ENCODE measurements at regions of chr13 and their contacts with region 1.

Region 1: DNA sequence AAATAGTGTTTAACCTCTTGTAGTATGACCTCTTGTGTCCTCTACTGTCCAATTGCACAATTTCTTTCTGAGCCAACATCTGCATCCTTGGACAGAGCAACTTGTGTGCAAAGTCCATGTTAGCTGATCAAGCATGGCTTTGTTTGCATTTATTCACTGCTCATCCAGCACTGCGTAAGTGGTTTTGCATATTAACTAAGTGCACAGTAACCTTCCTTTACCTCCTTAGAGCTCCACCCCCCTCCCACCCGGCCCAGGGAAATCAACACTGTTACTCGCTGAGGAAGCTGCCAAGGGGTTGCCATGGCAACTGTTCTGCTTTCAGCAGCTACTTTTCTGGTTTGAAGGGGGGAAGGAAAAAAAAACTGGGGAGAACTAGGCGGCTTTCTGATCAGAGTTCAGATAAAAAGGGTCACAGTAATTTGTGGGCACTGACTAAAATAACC is 153.5 kb upstream of the KLF12 start:
- DNase-seq: peak; percentile 88
- H3K4me3 ChIP-seq: peak overlapping the region; percentile 55
- H3K27ac ChIP-seq: no peak overlapping the region
- H3K4me1 ChIP-seq: peaks cover 51% of the 10 kb centered on the region
- CTCF ChIP-seq: no peak

Region 2: GRCh38 chr13:73765651-73766384 is 521.9 kb before region 1 on chr13:
- CTCF ChIA-PET with region 1: interaction called, 3 read pairs
- POLR2A ChIA-PET with region 1: interaction called, 6 read pairs
- intact Hi-C with region 1: loop called (anchors 2 kb)
- DNase-seq: peak; percentile 88
- H3K4me3 ChIP-seq: peak overlapping the region; percentile 52
- H3K27ac ChIP-seq: peak overlapping the region; percentile 80
- H3K4me1 ChIP-seq: peaks cover 32% of the 10 kb centered on the region
- CTCF ChIP-seq: no peak

Region 3: GRCh38 chr13:73945871-73946270 is 341.9 kb before region 1 on chr13:
- CTCF ChIA-PET with region 1: no interaction called
- POLR2A ChIA-PET with region 1: no interaction called
- intact Hi-C with region 1: loop called (anchors 5 kb)
- DNase-seq: no peak
- H3K4me3 ChIP-seq: no peak overlapping the region
- H3K27ac ChIP-seq: no peak overlapping the region
- H3K4me1 ChIP-seq: peaks cover 20% of the 10 kb centered on the region
- CTCF ChIP-seq: no peak

Region 4: GRCh38 chr13:73998631-73999030 is 289.1 kb before region 1 on chr13:
- CTCF ChIA-PET with region 1: no interaction called
- POLR2A ChIA-PET with region 1: no interaction called
- intact Hi-C with region 1: loop called (anchors 10 kb)
- DNase-seq: no peak
- H3K4me3 ChIP-seq: peak overlapping the region; percentile 3
- H3K27ac ChIP-seq: peak overlapping the region; percentile 17
- H3K4me1 ChIP-seq: peaks cover 57% of the 10 kb centered on the region
- CTCF ChIP-seq: peak; percentile 58; the same call in 1 of the 2 replicates

Region 5: DNA sequence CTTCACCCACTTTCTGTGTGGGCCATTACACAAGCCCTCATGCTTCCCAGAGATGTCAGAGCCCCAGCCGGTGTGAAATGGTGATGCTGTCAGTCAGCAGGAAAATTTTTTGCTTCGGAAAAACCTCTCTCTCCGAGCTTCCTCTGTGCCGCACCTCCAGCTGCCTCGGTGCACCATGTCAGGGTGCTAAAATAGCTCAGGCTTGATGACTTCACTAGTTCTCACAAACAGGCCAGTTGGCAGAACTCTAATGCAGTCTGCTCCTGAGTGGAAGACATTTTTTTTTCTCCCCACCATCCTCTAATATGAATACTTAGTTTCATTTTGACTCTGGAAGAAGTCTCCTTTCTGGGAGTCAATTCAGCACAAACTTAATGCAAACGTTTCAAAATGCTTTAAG is 224.8 kb before region 1 on chr13:
- CTCF ChIA-PET with region 1: no interaction called
- POLR2A ChIA-PET with region 1: interaction called, 3 read pairs
- intact Hi-C with region 1: loop called (anchors 5 kb)
- DNase-seq: peak; percentile 80
- H3K4me3 ChIP-seq: peak overlapping the region; percentile 60
- H3K27ac ChIP-seq: peak overlapping the region; percentile 84
- H3K4me1 ChIP-seq: peaks cover 54% of the 10 kb centered on the region
- CTCF ChIP-seq: no peak

Region 6: DNA sequence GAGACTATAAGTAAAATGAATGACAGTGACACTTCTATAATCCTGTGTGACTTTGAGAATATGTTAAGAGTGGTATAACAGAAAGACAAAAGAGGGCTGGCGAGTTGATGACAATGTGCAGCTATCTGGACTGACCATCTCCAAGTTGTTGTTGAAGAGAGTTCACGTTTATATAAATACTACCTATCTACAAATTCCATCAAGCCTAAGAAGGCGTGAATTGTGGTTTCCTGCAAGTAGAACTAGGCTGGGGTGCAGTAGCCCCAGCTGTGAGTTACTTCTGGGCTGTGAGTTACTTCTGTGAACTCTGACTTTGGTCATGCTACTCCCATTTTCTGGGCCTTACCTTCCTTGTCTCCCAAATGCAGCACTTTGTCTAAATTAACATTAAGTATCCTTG is 633.2 kb after region 1 on chr13:
- CTCF ChIA-PET with region 1: no interaction called
- POLR2A ChIA-PET with region 1: no interaction called
- intact Hi-C with region 1: no loop called
- DNase-seq: no peak
- H3K4me3 ChIP-seq: no peak overlapping the region
- H3K27ac ChIP-seq: no peak overlapping the region
- H3K4me1 ChIP-seq: no peaks in the 10 kb centered on the region
- CTCF ChIP-seq: no peak

Region 7: DNA sequence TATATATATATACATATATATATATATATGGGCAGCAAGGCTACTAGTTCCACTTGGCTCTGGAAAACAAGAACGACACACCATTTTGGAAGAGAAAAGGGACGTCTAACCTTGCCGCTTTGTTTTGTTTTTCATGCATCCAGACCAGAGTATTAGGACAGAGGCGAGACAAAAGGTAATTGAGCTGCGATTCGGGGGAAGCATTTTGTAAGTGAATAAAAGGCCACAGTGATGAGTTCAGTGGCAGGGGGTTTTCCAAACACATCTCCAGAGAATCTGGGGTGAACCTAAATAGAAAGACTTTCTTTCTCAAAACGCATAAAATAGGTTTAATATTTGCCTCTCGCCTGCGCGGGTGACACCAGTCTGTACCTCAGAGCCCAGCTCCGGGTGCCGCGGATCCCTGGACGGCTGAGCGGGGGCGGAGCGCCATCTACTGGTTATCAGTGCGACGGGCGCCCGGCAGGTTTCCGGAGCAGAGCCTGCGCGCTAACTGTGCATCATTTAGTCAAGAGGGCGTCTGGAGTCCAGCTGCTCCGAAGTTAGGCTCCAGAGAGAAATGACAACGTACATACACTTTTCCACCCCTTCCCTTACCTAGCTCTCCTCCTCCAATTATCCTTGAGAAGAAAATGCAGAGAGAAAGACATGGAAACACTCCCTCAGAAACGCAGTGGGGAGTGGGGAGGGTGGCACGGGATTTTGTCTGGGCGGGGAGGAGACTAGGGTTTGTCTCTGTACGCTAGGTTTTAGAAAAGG is 931.9 kb after region 1 on chr13:
- CTCF ChIA-PET with region 1: no interaction called
- POLR2A ChIA-PET with region 1: no interaction called
- intact Hi-C with region 1: loop called (anchors 10 kb)
- DNase-seq: peak; percentile 66
- H3K4me3 ChIP-seq: no peak overlapping the region
- H3K27ac ChIP-seq: no peak overlapping the region
- H3K4me1 ChIP-seq: no peaks in the 10 kb centered on the region
- CTCF ChIP-seq: peak; percentile 97

Region 8: GRCh38 chr13:75725736-75726135 is 1438.0 kb after region 1 on chr13:
- CTCF ChIA-PET with region 1: no interaction called
- POLR2A ChIA-PET with region 1: no interaction called
- intact Hi-C with region 1: no loop called
- DNase-seq: no peak
- H3K4me3 ChIP-seq: no peak overlapping the region
- H3K27ac ChIP-seq: no peak overlapping the region
- H3K4me1 ChIP-seq: no peaks in the 10 kb centered on the region
- CTCF ChIP-seq: no peak

Measured in OCI-LY7 (cell line).